Gastrocnemius medialis (tissue), 4 donors: ENCODE measurements at regions of chr16 and their contacts with region 1.

Region 1: DNA sequence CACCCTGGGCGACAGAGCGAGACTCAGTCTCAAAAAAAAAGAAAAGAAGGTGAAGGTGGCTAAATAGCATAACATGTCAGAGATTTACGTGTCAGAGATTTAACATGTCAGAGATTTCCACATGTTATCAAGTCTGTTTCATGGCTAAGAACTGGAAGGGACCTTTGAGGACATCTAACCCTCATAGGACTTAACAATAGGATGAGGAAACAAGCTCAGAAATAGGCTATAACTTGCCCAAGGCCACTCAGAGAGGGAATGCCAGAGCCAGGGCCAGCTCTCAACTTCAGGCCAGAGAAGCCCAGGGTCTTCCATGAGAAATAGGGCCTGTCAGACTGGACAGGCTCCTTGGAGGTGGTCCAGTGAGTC is 26.8 kb upstream of the ZNF629 start:
- DNase-seq: no peak
- ATAC-seq: peak; percentile 29 to 73
- H3K4me3 ChIP-seq: peak overlapping the region; percentile 57 to 67 (median 62)
- H3K27ac ChIP-seq: peak overlapping the region; percentile 70 to 87 (median 78)
- H3K4me1 ChIP-seq: no peaks in the 10 kb centered on the region
- H3K27me3 ChIP-seq: no peaks in the 10 kb centered on the region
- CTCF ChIP-seq: no peak
- POLR2A ChIP-seq: no peak

Region 2: GRCh38 chr16:30747799-30748634 is 65.8 kb before region 1 on chr16 and contains the start of gene PHKG2:
- in situ Hi-C with region 1: no loop called
- intact Hi-C with region 1: loop called (anchors 1 kb)
- DNase-seq: peak; percentile 99 to 100
- ATAC-seq: peak; percentile 95 to 96
- H3K4me3 ChIP-seq: peak within 1 kb of the TSS; percentile 76 to 91 (median 88)
- H3K27ac ChIP-seq: peak within 1 kb of the TSS; percentile 73 to 91 (median 79)
- H3K4me1 ChIP-seq: peaks cover 7 to 8% of the 10 kb centered on the region in 2 donors
- H3K27me3 ChIP-seq: no peaks in the 10 kb centered on the region
- CTCF ChIP-seq: no peak
- POLR2A ChIP-seq: peak; percentile 48 to 53
- total RNA-seq, gene PHKG2: 8.8 to 30.0 (median 21.6) TPM

Region 3: DNA sequence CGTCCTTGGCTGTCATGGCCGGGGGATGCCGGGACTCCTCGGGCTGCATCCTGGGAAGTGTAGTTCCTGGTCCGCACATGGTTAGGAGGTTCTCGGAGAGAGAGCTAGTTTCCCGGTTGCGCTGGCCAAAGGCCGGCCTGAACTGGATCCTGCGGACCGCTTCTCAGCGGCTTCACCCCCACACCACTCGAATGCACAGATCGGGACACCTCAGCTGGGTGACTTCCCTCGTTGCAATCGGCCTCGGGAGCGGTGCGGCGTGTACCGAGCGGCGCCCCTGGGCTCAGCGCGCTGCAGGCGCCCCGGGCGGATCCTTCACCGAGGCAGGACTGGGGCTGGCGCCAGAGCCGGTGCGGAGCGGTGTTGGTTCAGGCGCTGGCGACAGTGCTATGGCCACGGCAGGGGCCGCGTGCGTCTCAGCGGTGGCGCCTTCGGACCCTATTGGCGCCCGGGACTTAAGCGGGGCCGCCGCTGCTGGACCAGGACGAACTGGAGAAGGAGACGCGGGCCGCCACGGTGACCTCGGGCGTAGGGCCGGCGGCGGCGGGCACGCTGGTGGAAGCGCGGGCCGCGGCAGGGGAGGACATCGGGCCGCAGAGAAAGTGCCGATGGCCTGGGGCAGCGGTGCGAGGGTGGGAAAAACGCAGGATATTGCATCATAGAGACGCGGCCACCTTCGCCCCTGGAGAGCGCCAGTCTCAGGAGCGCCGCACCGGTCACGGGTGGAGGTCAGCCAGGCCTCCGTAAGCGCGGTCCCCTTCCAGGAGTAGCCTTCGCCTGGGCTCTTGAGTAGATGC is 38.2 kb before region 1 on chr16:
- in situ Hi-C with region 1: no loop called
- intact Hi-C with region 1: loop called (anchors 2 kb)
- DNase-seq: peak; percentile 76 to 85
- ATAC-seq: peak; percentile 73 to 87
- H3K4me3 ChIP-seq: peak overlapping the region; percentile 78 to 94 (median 84)
- H3K27ac ChIP-seq: peak overlapping the region; percentile 84 to 96 (median 94)
- H3K4me1 ChIP-seq: peaks cover 31 to 41% of the 10 kb centered on the region in 2 donors
- H3K27me3 ChIP-seq: no peaks in the 10 kb centered on the region
- CTCF ChIP-seq: no peak
- POLR2A ChIP-seq: peak; percentile 49 to 66